HepG2 (cell line): ENCODE measurements at regions of chrX and their contacts with region 1.

Region 1: GRCh38 chrX:39772057-39772832 is 325.5 kb downstream of the BCOR start:
- DNase-seq: peak; percentile 81
- ATAC-seq: peak; percentile 89
- H3K4me3 ChIP-seq: peak overlapping the region in 1 of 3 experiments; percentile 40; a peak in 2 of 6 replicates
- H3K27ac ChIP-seq: peak overlapping the region; percentile 44
- H3K4me1 ChIP-seq: peaks cover 38% of the 10 kb centered on the region
- H3K27me3 ChIP-seq: peaks cover 0 to 8% of the 10 kb centered on the region in 2 experiments; a peak in 1 of 5 replicates
- CTCF ChIP-seq: no peak
- EP300 ChIP-seq: peak in 1 of 2 experiments; percentile 59; a peak in 1 of 4 replicates
- POLR2A ChIP-seq: no peak
- RAD21 ChIP-seq: no peak

Region 2: DNA sequence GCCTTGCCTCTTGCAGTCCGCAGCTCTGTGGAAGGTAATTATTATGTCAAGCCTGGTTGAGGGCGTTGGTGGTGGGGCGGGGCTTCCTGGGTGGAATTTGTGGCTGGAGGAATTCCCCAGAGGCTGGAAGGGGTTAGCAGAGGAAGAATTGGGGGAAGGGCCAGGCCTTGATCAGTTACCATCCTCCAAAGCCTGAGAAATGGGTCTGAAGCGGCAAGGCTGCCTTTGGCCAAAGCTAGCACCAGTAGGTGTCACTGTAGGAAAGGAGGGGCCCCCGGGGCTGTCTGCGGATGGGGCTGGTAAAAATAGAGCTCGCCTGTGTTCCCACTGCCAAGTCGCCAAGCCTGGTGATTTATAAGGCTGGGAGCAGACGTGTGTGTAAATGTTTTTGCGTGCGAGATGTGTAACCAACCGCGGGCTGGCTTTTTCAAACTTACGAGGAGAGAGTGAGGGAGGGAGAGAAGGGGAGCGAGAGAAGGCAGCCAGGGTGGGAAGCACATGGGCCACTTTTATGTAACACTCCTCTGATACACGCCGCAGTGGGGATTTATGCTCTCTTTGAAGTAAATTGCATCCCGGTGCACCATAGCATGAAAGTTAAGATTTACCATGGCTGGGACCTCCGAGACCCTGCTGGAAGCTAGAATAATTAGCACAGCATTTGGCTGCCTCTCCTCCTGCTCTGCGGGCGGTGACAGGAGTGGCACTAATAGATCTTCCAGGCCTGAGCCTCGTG is 41.4 kb before region 1 on chrX:
- CTCF ChIA-PET with region 1: no interaction called
- POLR2A ChIA-PET with region 1: interaction called, 3 read pairs
- in situ Hi-C with region 1: no loop called
- intact Hi-C with region 1: loop called (anchors 5 kb)
- DNase-seq: peak; percentile 4
- ATAC-seq: peak; percentile 76
- H3K4me3 ChIP-seq: no peak overlapping the region
- H3K27ac ChIP-seq: no peak overlapping the region
- H3K4me1 ChIP-seq: peaks cover 29% of the 10 kb centered on the region
- H3K27me3 ChIP-seq: no peaks in the 10 kb centered on the region
- CTCF ChIP-seq: peak; percentile 76
- EP300 ChIP-seq: no peak
- POLR2A ChIP-seq: no peak
- RAD21 ChIP-seq: 0 out of 2 replicates have a peak, but pooled peaks have one; percentile 51

Region 3: DNA sequence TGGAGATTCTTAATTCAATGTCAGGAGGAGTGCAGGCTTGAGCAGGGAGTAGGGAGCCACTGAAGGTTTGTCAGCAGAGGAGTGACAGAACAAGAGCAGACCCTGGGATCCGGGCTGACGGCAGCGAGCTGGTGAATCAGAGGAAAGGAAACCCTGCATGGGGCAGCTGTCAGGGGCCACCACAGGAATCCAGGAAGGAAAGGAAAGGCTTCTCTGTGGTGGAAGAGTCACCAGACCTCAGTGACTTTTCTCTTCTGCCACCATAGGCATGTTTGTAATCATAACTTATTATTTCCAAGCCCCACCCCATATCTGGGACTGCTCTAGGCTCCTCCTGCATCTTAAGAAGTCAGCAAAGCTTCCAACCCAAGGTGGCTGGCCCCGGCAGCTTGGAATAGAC is 174.6 kb after region 1 on chrX:
- CTCF ChIA-PET with region 1: no interaction called
- POLR2A ChIA-PET with region 1: no interaction called
- in situ Hi-C with region 1: no loop called
- intact Hi-C with region 1: no loop called
- DNase-seq: no peak
- ATAC-seq: no peak
- H3K4me3 ChIP-seq: no peak overlapping the region
- H3K27ac ChIP-seq: no peak overlapping the region
- H3K4me1 ChIP-seq: peaks cover 9% of the 10 kb centered on the region
- H3K27me3 ChIP-seq: no peaks in the 10 kb centered on the region
- CTCF ChIP-seq: no peak
- EP300 ChIP-seq: no peak
- POLR2A ChIP-seq: no peak
- RAD21 ChIP-seq: no peak